A673 (cell line): ENCODE measurements at regions of chr9 and their contacts with region 1.

Region 1: GRCh38 chr9:70229579-70229978 is 29.2 kb upstream of the SMC5 start:
- DNase-seq: peak; percentile 24
- H3K4me3 ChIP-seq: no peak overlapping the region
- H3K27ac ChIP-seq: no peak overlapping the region
- H3K4me1 ChIP-seq: no peaks in the 10 kb centered on the region
- H3K27me3 ChIP-seq: no peaks in the 10 kb centered on the region
- CTCF ChIP-seq: peak; percentile 49

Region 2: GRCh38 chr9:69971643-69972449 is 257.7 kb before region 1 on chr9:
- CTCF ChIA-PET with region 1: no interaction called
- POLR2A ChIA-PET with region 1: no interaction called
- intact Hi-C with region 1: loop called (anchors 5 kb)
- DNase-seq: peak; percentile 60
- H3K4me3 ChIP-seq: no peak overlapping the region
- H3K27ac ChIP-seq: no peak overlapping the region
- H3K4me1 ChIP-seq: no peaks in the 10 kb centered on the region
- H3K27me3 ChIP-seq: no peaks in the 10 kb centered on the region
- CTCF ChIP-seq: peak; percentile 85

Region 3: DNA sequence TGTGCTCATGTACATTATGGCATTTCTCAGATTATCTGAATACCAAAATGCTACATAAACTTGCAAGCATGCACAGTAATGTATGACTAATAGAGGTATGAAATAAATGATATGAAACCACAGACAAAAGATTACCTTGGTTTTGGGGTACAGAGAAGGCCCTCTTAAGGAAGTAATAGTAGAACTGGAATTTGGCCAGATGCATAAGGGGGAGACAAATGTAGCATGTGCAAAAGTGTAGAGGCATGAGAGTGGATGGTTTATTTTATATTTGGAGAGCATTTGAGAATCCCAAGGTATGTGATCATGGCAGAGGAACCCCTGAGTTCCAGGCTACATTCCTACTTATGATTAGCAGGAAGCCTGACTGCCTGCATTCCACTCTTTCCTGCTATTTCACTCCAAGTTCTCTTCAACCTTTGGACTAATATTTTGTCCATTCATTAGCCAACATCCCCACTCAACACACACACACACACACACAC is 111.7 kb before region 1 on chr9:
- CTCF ChIA-PET with region 1: no interaction called
- POLR2A ChIA-PET with region 1: no interaction called
- intact Hi-C with region 1: loop called (anchors 5 kb)
- DNase-seq: no peak
- H3K4me3 ChIP-seq: no peak overlapping the region
- H3K27ac ChIP-seq: no peak overlapping the region
- H3K4me1 ChIP-seq: no peaks in the 10 kb centered on the region
- H3K27me3 ChIP-seq: no peaks in the 10 kb centered on the region
- CTCF ChIP-seq: no peak